ENCODE measurements at regions of chr5 and their contacts with region 1.

Region 1: DNA sequence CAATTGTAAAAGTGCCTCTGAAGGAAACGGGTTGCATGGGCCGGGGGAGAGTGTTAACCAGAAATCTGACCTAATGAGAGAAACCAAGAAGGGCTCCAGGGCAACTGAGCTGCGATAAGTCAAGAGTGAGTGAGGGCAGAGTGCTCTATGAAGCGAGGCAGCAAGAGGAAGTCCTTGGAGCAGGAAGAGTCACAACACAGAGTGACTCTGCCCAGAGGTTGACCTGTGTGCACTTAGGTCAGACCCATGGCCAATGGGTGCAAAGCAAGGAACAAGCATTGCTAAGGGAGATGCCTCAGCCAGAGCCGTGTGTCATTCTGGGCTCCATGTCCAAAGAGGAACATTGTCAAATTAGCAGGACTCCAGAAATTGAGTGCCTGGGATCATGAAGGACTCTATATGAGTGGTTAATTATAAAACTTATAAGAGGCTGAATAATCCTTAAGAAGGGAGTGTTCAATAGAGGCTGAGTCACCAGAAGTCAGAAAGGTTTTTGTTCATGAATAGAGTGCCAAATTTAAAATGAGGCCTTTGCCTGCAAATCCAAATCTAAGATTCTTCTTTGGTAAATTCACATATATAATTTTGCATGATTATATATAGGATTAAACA is 438.5 kb downstream of the MED10 start:
- DNase-seq: no peak

Region 2: GRCh38 chr5:5902678-5903646 is 36.9 kb before region 1 on chr5:
- intact Hi-C with region 1: loop called in 1 of 2 experiments (anchors 2 kb)
- DNase-seq: no peak

Region 3: GRCh38 chr5:5929291-5930020 is 10.4 kb before region 1 on chr5:
- intact Hi-C with region 1: loop called in 1 of 2 experiments (anchors 1 kb)
- DNase-seq: no peak

Region 4: GRCh38 chr5:5953584-5954274 is 13.9 kb after region 1 on chr5:
- intact Hi-C with region 1: no loop called
- DNase-seq: no peak